Posterior vena cava (tissue), 2 donors: ENCODE measurements at regions of chr3 and their contacts with region 1.

Region 1: GRCh38 chr3:46449755-46450552 is 14.8 kb downstream of the LTF start:
- DNase-seq: no peak

Region 2: DNA sequence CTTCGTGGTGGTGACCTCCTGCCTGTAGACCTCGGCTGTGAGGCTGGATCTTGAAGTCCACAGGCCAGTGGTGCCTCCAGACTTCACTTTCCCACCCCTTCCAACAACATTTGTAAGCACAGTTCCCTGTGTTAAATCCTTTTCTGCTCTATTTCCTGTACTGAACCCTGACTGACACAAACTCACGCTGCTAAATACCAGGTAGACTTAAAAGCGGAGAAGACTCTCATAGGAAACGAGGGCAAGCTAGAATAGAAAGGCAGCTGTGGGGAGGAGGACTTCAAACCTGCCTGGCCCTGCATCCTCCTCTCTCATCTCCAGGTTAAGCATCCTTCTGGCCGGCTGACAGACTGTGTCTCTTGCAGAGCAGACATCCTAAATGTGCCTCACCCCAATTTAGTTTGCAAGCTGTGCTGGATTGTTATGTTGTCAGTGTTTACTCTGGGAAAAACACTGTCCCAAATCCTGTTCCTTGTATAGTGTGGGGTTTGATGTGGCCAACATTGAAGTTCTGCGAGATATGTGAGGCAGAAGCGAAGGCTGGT is 1120.1 kb before region 1 on chr3:
- intact Hi-C with region 1: loop called in 1 of 2 experiments (anchors 5 kb)
- DNase-seq: no peak